SK-N-SH (cell line): ENCODE measurements at regions of chr9 and their contacts with region 1.

Region 1: DNA sequence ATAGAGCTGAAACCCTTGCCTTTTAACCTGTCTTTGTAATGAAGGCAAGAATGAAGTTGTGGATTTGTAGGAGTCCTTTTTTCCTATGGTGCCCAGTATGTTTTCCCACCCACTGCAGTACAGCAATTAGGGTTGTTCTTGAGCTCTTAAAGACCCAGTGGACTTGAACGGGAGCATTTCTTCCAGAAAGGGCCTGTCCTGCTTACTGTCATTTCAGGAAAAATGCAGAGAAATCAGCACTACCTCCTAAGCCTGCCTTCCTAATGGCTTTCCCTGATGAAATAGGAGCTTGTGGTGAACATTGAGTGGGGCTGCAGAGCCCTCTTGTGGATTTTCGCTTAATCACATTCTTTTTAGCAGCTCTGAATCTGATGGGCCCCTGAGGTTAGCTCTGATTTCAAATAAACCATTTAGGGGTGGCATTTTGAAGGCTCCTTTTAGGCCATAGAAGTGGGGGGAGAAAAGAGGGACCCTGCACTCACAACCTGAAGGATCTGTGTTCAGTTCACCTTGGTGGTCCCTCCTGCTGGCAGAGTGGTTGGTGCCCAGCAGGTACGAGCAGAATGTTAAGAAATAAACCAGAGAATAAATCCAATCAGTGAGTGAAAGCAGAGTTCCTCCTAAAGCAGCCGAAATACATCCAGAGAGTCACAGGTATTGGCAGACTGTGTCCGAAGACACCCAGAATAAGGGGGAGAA is 188.0 kb upstream of the KLF9 start:
- DNase-seq: peak; percentile 66
- H3K4me3 ChIP-seq: peak overlapping the region in 1 of 2 experiments; percentile 14; a peak in 1 of 4 replicates
- H3K27ac ChIP-seq: peak overlapping the region; percentile 48 to 90
- H3K4me1 ChIP-seq: peaks cover 15 to 19% of the 10 kb centered on the region in 2 experiments
- H3K27me3 ChIP-seq: no peaks in the 10 kb centered on the region
- CTCF ChIP-seq: peak; percentile 85
- EP300 ChIP-seq: no peak
- RAD21 ChIP-seq: peak; percentile 98

Region 2: DNA sequence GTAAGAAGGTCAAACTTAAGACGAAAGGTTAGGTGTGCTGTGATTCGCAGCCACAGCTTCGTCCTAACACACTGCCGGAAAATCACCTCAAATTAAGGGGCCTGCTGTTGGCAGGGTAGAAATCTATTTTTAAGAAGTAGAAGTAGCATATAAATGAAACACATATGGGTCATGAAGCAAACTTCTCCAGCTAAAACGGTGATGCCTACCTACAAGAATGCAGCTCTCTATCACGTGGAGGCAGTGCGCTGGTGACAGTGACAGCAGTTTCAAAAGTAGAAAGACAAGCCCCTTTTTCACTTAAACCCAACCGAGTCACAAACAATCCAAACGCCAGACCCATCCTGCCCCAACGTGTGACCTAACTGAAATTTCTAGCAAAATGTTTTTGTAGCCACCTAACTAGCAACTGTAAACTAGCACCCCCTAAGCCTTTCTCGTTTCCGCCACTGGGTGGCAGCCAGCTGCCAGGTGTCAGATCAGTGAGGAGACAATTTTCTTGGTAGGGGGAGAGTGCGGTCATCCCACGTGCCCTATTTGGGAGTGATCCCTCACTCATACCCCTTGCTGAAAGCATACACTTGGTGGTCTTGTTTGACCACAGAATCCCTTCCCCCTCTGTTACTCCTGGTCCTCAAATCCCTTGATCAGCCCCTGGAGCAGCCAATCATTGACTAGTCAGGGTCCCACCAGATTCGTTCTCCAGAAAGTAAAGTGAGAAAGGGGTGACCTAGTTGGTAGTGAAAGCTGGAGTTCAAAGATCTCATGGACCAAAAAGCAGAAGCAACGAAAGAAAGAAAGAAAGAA is 630.6 kb before region 1 on chr9:
- CTCF ChIA-PET with region 1: interaction called, 12 read pairs
- POLR2A ChIA-PET with region 1: no interaction called
- DNase-seq: peak; percentile 69
- H3K4me3 ChIP-seq: peak overlapping the region in 1 of 2 experiments; percentile 53; a peak in 1 of 4 replicates
- H3K27ac ChIP-seq: peak overlapping the region in 1 of 2 experiments; percentile 53; a peak in 2 of 4 replicates
- H3K4me1 ChIP-seq: peaks cover 0 to 16% of the 10 kb centered on the region in 2 experiments; a peak in 3 of 4 replicates
- H3K27me3 ChIP-seq: no peaks in the 10 kb centered on the region
- CTCF ChIP-seq: peak; percentile 97
- EP300 ChIP-seq: no peak
- RAD21 ChIP-seq: peak; percentile 92

Region 3: GRCh38 chr9:70347046-70347445 is 255.4 kb before region 1 on chr9:
- CTCF ChIA-PET with region 1: interaction called, 69 read pairs
- POLR2A ChIA-PET with region 1: no interaction called
- DNase-seq: no peak
- H3K4me3 ChIP-seq: no peak overlapping the region
- H3K27ac ChIP-seq: no peak overlapping the region
- H3K4me1 ChIP-seq: no peaks in the 10 kb centered on the region; a peak in 1 of 4 replicates
- H3K27me3 ChIP-seq: no peaks in the 10 kb centered on the region
- CTCF ChIP-seq: no peak
- EP300 ChIP-seq: no peak
- RAD21 ChIP-seq: no peak

Region 4: DNA sequence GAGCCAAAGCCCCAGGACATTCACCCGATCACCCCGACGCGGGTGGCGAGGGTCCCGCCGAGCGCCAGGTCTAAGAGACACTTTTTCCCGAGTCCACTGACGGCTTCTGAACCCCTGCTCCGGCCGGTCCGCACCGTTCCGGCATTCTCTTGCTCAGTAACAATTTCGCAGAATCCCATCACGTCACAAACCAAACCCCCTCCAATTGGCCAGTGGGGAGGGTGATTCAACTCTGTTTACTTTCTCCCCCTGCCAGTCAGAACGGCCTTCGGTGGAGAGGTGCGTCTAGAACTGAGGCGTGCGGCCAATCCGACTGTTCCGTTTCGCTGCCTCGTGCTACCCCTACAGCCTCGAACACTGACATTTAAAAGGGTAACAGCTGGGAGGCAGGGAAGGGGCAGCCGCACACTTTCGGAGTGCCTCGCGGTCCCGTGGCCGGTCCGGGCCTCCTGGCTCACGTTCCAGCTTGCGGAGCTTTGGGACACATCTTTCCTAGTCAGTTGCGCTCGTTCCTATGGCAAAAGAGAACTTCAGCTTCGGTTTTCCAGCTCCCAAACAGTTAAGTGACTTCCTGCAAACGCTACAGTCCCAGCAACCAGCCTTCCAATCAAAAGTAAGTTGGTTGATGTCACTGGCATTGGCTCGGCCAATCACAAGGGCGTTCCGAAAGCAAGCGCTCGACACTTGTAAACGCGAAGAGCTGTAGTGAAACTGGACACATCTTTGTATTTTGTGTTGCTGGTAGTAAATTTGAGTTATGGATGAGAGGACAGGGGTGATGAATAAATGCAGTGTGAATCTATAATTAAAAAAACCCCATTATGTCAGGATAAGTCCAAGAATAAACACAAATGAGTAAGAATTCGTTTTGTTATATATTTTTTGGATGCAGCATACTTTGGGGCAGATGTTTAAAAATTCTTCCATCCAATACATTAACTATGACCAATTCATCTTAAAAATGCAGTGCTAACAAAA is 188.4 kb before region 1 on chr9 and contains the start of gene KLF9:
- CTCF ChIA-PET with region 1: interaction called, 9 read pairs
- POLR2A ChIA-PET with region 1: interaction called, 20 read pairs
- DNase-seq: peak; percentile 89
- H3K4me3 ChIP-seq: peak within 1 kb of the TSS; percentile 82 to 92
- H3K27ac ChIP-seq: peak within 1 kb of the TSS; percentile 97 to 100
- H3K4me1 ChIP-seq: peaks cover 20 to 25% of the 10 kb centered on the region in 2 experiments; a peak in 3 of 4 replicates
- H3K27me3 ChIP-seq: no peaks in the 10 kb centered on the region
- CTCF ChIP-seq: no peak
- EP300 ChIP-seq: peak; percentile 17 to 81; a peak in 3 of 4 replicates
- RAD21 ChIP-seq: no peak
- polyA plus RNA-seq, gene KLF9: 5.8 and 6.9 TPM in 2 replicates

Region 5: DNA sequence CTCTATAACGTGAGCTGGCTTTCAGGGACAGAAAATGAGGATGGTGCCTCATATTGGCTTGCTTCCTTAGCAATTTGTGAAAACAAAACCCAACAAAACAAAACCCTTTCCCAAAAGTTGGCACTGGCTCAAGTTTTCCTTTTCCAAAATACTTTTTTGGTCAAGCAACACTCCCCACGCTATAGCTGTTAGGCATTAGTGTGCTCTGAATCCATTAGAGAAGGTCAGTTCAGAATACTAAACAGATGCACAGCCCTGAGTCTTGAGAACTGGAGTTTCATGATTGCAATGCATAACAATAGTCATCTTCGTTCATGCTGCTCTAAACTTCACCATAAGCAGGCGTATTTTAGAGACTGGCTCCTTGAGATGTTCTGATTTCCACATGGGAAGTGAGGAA is 16.0 kb before region 1 on chr9:
- CTCF ChIA-PET with region 1: interaction called, 14 read pairs
- POLR2A ChIA-PET with region 1: no interaction called
- DNase-seq: no peak
- H3K4me3 ChIP-seq: no peak overlapping the region
- H3K27ac ChIP-seq: peak overlapping the region; percentile 47 to 97; a peak in 3 of 4 replicates
- H3K4me1 ChIP-seq: peaks cover 12 to 38% of the 10 kb centered on the region in 2 experiments
- H3K27me3 ChIP-seq: no peaks in the 10 kb centered on the region
- CTCF ChIP-seq: no peak
- EP300 ChIP-seq: no peak
- RAD21 ChIP-seq: no peak